HepG2 (cell line): ENCODE measurements at regions of chr16 and their contacts with region 1.

Region 1: GRCh38 chr16:11255737-11256660 is at the start of gene SOCS1:
- DNase-seq: peak; percentile 78
- ATAC-seq: peak; percentile 69
- H3K4me3 ChIP-seq: peak within 1 kb of the TSS; percentile 87 to 98 (median 95)
- H3K27ac ChIP-seq: peak within 1 kb of the TSS; percentile 93
- H3K4me1 ChIP-seq: peaks cover 83% of the 10 kb centered on the region
- H3K27me3 ChIP-seq: no peaks in the 10 kb centered on the region; a peak in 2 of 5 replicates
- CTCF ChIP-seq: peak; percentile 81
- EP300 ChIP-seq: 0 out of 4 replicates have a peak, but pooled peaks of 1 of the 2 experiments have one; percentile 16
- POLR2A ChIP-seq: peak in 1 of 2 experiments; percentile 99; a peak in 2 of 4 replicates
- RAD21 ChIP-seq: peak; percentile 99
- total RNA-seq, gene SOCS1: 3.3 and 5.3 TPM in 2 replicates

Region 2: DNA sequence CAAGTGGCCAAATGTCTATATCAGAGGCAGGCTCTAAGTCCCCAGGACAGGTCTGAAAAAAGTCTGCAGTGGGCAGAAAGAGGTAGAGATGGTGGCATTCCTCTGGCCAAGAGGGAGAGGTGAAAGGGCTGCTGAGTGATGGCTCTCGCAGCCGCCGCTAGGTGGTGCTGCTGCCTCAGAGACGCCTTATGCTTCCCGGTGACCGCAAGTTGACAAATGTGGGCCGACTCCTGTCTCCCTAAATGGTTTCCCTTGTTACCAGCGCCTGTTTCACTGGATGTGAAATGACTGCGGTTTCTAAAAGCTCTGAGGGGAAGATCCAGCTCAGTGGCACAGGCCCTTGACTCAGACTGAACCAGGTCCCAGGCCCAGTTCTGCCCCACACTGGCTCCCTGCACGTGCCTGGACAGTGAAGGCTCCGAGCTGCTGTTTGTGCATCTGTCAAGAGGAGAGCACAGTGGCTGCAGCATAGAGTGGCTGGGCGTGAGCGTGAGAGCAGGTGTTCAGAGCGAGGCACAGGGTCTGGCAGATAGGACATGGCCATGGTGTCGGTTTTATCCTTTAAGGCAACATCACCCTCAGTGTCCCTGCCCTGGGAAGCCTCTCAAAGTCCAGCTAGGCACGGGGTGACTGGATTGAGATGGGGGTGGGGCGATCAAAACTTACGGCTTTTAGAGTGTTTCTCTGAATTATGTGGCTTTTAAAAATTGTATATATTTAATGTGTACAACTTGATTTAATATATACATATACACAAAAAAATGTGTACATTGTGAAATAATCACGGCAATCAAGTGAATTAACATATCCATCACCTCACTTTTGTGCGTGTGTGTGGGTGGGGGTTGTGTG is 291.7 kb before region 1 on chr16:
- CTCF ChIA-PET with region 1: interaction called, 15 read pairs
- POLR2A ChIA-PET with region 1: interaction called, 24 read pairs
- in situ Hi-C with region 1: loop called (anchors 5 kb)
- intact Hi-C with region 1: no loop called
- DNase-seq: peak; percentile 74
- ATAC-seq: peak; percentile 96
- H3K4me3 ChIP-seq: no peak overlapping the region
- H3K27ac ChIP-seq: no peak overlapping the region
- H3K4me1 ChIP-seq: peaks cover 14% of the 10 kb centered on the region
- H3K27me3 ChIP-seq: no peaks in the 10 kb centered on the region
- CTCF ChIP-seq: peak; percentile 99
- EP300 ChIP-seq: peak in 1 of 2 experiments; percentile 52; a peak in 1 of 4 replicates
- POLR2A ChIP-seq: no peak
- RAD21 ChIP-seq: peak; percentile 97

Region 3: DNA sequence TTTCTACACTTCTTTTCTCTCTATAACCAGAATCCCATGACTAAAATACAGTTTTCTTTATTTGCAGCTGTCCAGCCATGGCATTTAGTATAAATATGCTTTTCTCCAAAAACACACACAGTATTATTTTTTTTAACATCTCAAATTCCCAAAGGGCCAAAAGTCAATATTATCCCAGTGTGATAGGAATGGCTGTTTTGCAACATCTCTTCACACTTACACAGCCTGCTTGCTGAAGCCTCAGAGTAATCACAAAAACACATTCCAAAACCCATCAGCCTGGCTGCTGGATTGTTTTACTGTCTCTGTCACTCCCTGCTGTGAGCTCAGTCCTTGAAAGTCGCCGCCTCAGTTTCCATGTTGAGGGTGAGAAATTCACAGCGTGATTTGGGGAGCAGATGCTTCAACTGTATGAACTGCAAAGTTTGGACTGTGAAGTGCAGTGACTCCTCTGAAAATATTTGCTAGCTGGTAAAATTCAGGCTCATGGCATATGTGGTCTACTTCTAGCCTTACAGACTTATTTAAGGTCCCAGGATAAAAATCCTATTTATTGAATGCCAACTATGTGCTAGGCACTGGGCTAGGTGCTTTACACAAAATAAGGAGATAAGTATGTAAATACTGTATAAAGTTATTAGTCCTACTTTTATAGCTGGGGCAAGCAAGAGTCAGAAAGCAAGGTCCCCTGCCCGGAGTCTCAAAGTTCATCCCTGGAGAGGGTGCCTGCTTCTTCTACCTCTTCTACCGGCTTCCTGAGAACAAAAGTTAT is 116.5 kb before region 1 on chr16:
- CTCF ChIA-PET with region 1: no interaction called
- POLR2A ChIA-PET with region 1: interaction called, 20 read pairs
- in situ Hi-C with region 1: no loop called
- intact Hi-C with region 1: no loop called
- DNase-seq: peak; percentile 96
- ATAC-seq: peak; percentile 88
- H3K4me3 ChIP-seq: peak overlapping the region in 1 of 3 experiments; percentile 1; a peak in 1 of 6 replicates
- H3K27ac ChIP-seq: peak overlapping the region; percentile 14
- H3K4me1 ChIP-seq: peaks cover 37% of the 10 kb centered on the region
- H3K27me3 ChIP-seq: no peaks in the 10 kb centered on the region
- CTCF ChIP-seq: no peak
- EP300 ChIP-seq: peak; percentile 82 to 91
- POLR2A ChIP-seq: no peak
- RAD21 ChIP-seq: peak; percentile 9; the same call in 1 of the 2 replicates

Region 4: DNA sequence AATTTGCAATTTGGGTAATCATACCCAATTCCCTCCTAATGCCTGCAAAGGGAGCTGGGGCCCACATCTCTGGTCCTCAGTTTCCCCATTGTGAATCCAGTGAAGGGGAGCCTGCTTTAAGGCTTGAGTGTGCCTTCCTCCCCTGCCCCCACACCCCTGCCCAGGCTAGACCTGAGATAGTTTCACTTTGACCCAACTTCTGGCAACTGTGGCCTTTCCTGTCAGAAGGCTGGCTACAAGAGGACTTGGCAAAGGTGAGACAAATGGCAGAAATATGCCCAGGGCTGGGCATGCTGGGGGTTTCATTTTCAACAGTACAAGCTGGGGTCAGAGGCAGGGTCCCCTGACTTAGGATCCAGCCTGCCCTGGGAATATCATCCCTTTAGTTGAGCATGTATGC is 10.0 kb before region 1 on chr16:
- CTCF ChIA-PET with region 1: no interaction called
- POLR2A ChIA-PET with region 1: interaction called, 12 read pairs
- in situ Hi-C with region 1: no loop called
- intact Hi-C with region 1: no loop called
- DNase-seq: no peak
- ATAC-seq: no peak
- H3K4me3 ChIP-seq: no peak overlapping the region
- H3K27ac ChIP-seq: no peak overlapping the region
- H3K4me1 ChIP-seq: peaks cover 44% of the 10 kb centered on the region
- H3K27me3 ChIP-seq: peaks cover 0 to 21% of the 10 kb centered on the region in 2 experiments; a peak in 3 of 5 replicates
- CTCF ChIP-seq: no peak
- EP300 ChIP-seq: no peak
- POLR2A ChIP-seq: no peak
- RAD21 ChIP-seq: no peak

Region 5: DNA sequence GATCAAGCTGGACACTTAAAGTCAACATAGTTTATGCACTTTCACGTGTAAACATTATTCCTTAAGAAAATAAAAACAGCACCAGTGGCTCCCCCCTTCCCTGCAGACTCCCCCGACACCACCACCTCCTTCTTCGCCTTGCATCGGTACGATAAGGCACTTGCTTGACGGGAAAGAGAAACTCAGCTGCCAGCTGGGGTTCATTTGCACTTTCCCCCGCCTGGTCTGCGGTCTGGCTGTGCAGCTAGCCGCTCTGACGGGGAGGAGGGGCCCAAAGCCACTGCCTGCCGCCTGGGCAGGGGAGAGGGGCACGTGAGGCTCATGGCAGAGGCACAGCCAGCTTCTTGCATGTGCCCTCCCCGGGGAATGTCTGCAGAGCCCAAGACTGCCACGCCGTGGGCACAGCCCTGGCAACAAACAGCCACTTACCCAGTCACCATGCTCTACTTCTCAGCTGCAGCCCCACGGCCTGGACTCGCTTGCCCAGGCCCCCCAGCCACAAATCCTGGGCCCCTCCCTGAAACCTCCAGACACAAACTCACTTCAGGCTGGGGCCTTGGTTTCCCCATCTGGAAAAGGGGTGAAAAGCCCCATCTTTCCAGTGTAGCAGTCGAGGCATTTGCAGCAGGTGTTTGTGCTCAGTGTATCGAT is 41.6 kb after region 1 on chr16:
- CTCF ChIA-PET with region 1: no interaction called
- POLR2A ChIA-PET with region 1: interaction called, 167 read pairs
- in situ Hi-C with region 1: no loop called
- intact Hi-C with region 1: loop called (anchors 5 kb)
- DNase-seq: peak; percentile 67
- ATAC-seq: peak; percentile 71
- H3K4me3 ChIP-seq: peak overlapping the region; percentile 15 to 67 (median 41)
- H3K27ac ChIP-seq: peak overlapping the region; percentile 68
- H3K4me1 ChIP-seq: peaks cover 97% of the 10 kb centered on the region
- H3K27me3 ChIP-seq: no peaks in the 10 kb centered on the region
- CTCF ChIP-seq: peak; percentile 47
- EP300 ChIP-seq: peak in 1 of 2 experiments; percentile 31; a peak in 1 of 4 replicates
- POLR2A ChIP-seq: 0 out of 4 replicates have a peak, but pooled peaks have one; percentile 31 to 50
- RAD21 ChIP-seq: peak; percentile 39; the same call in 1 of the 2 replicates

Region 6: GRCh38 chr16:11345040-11345862 is 89.3 kb after region 1 on chr16 and contains the start of gene RMI2:
- CTCF ChIA-PET with region 1: no interaction called
- POLR2A ChIA-PET with region 1: interaction called, 32 read pairs
- in situ Hi-C with region 1: loop called (anchors 5 kb)
- intact Hi-C with region 1: no loop called
- DNase-seq: peak; percentile 99
- ATAC-seq: peak; percentile 95
- H3K4me3 ChIP-seq: peak within 1 kb of the TSS; percentile 72 to 75 (median 74)
- H3K27ac ChIP-seq: peak within 1 kb of the TSS; percentile 59
- H3K4me1 ChIP-seq: peaks cover 83% of the 10 kb centered on the region
- H3K27me3 ChIP-seq: no peaks in the 10 kb centered on the region; a peak in 1 of 5 replicates
- CTCF ChIP-seq: no peak
- EP300 ChIP-seq: no peak
- POLR2A ChIP-seq: peak; percentile 51 to 52; a peak in 3 of 4 replicates
- RAD21 ChIP-seq: peak; percentile 74; the same call in 1 of the 2 replicates
- total RNA-seq, gene RMI2: 55.7 and 65.3 TPM in 2 replicates

Region 7: DNA sequence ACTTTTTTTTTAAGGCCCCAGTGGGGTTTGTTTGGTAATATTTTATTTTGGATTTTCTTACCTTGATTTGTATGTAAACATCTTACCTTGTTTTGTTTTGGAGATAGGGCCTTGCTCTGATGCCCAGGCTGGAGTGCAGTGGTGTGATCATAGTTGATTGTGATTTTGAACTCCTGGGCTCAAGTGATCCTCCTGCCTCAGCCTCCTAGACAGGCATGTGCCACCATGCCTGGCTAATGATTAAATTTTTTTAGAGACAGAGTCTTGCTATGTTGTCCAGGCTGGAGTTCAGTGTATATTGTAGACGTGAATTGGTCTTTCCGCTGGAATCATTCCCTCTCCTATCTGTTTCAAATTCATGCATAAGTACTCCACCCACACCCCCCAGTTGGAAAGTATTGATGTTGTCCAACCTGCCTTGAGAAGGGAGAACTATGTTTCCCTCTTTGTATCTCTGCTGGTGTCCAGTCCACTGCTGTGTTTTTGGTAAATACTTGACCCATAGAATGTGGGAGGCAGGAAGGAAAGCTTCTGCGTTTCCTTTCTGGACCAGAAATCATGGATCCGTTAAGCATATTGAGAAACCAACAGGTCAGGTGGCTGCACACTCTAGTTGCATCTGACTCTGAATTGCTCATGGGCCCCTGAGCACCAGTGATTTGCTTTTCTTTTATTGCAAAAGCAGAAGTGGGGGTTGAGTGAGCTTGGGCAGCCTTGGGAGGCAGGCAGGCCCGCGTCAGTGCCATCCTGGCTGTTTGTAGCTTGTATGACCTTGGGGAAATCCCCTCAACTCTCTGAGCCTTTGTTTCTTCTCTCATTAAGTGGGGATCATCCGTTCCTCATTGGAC is 114.3 kb after region 1 on chr16:
- CTCF ChIA-PET with region 1: interaction called, 6 read pairs
- POLR2A ChIA-PET with region 1: interaction called, 148 read pairs
- in situ Hi-C with region 1: no loop called
- intact Hi-C with region 1: loop called (anchors 5 kb)
- DNase-seq: peak; percentile 78
- ATAC-seq: peak; percentile 70
- H3K4me3 ChIP-seq: peak overlapping the region; percentile 23 to 56 (median 25); a peak in 3 of 6 replicates
- H3K27ac ChIP-seq: peak overlapping the region; percentile 74
- H3K4me1 ChIP-seq: peaks cover 68% of the 10 kb centered on the region
- H3K27me3 ChIP-seq: no peaks in the 10 kb centered on the region
- CTCF ChIP-seq: no peak
- EP300 ChIP-seq: peak in 1 of 2 experiments; percentile 41; a peak in 2 of 4 replicates
- POLR2A ChIP-seq: no peak; a peak in 1 of 4 replicates
- RAD21 ChIP-seq: no peak

Region 8: GRCh38 chr16:11484691-11485258 is 228.8 kb after region 1 on chr16:
- CTCF ChIA-PET with region 1: no interaction called
- POLR2A ChIA-PET with region 1: no interaction called
- in situ Hi-C with region 1: no loop called
- intact Hi-C with region 1: no loop called
- DNase-seq: no peak
- ATAC-seq: peak; percentile 26; the same call in 2 of the 3 replicates
- H3K4me3 ChIP-seq: no peak overlapping the region
- H3K27ac ChIP-seq: no peak overlapping the region
- H3K4me1 ChIP-seq: peaks cover 39% of the 10 kb centered on the region
- H3K27me3 ChIP-seq: no peaks in the 10 kb centered on the region
- CTCF ChIP-seq: no peak
- EP300 ChIP-seq: no peak
- POLR2A ChIP-seq: no peak
- RAD21 ChIP-seq: no peak